ENCODE measurements at regions of chr13 and their contacts with region 1.

Region 1: GRCh38 chr13:40388617-40389016 is 277.8 kb downstream of the FOXO1 start:
- DNase-seq: peak; percentile 75 to 93
- ATAC-seq: peak; percentile 90 to 97 (median 94)
- H3K4me3 ChIP-seq: peak overlapping the region; percentile 45
- H3K4me3 Mint-ChIP-seq: peak overlapping the region; percentile 84
- H3K27ac ChIP-seq: peak overlapping the region; percentile 99
- H3K27ac Mint-ChIP-seq: peak overlapping the region; percentile 93 to 97
- H3K4me1 ChIP-seq: peaks cover 25% of the 10 kb centered on the region
- H3K4me1 Mint-ChIP-seq: peaks cover 42% of the 10 kb centered on the region in 2 donors
- H3K27me3 ChIP-seq: no peaks in the 10 kb centered on the region
- H3K27me3 Mint-ChIP-seq: no peaks in the 10 kb centered on the region
- CTCF ChIP-seq: no peak

Region 2: DNA sequence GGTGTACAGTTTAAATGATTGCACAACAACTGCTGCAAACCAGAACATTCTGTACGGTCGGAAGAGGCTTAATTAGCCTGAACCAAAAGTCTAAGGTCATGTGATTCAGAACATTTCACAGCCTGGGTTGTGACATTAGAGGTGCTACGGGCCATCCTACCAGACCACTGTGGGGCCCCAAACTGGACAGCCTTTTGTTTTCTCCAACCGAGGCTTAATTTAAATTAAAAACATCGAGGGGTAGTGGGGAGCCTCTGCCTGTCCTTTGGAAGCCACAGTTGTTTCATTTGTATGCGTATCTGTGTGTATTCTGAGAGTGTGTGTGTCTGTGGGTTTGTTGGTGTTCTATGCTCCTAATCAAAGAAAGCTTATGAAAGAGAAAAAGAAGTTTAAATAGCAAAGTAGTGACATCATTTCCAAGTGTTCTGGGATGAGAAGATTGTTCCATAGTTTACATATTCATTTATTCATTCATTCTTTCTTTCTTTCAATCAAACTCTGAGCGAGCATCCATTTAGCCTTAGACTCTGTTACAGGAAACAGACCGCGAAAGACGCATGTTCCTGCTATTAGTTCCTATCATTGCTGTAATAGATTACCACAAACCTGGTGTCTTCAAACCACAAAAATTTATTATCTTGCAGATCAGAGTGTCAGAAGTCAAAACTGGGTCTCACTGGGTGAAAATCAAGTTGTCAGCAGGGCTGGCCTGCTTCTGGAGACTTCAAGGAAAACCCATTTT is 167.0 kb before region 1 on chr13:
- intact Hi-C with region 1: loop called (anchors 1 kb)
- DNase-seq: peak; percentile 24 to 84
- ATAC-seq: peak; percentile 71 to 76 (median 73)
- H3K4me3 ChIP-seq: no peak overlapping the region
- H3K4me3 Mint-ChIP-seq: peak overlapping the region; percentile 32
- H3K27ac ChIP-seq: peak overlapping the region; percentile 70
- H3K27ac Mint-ChIP-seq: peak overlapping the region; percentile 74 to 88
- H3K4me1 ChIP-seq: peaks cover 21% of the 10 kb centered on the region
- H3K4me1 Mint-ChIP-seq: peaks cover 33 to 34% of the 10 kb centered on the region in 2 donors
- H3K27me3 ChIP-seq: no peaks in the 10 kb centered on the region
- H3K27me3 Mint-ChIP-seq: no peaks in the 10 kb centered on the region
- CTCF ChIP-seq: no peak

Region 3: GRCh38 chr13:40429706-40430545 is 41.3 kb after region 1 on chr13:
- intact Hi-C with region 1: no loop called
- DNase-seq: no peak
- ATAC-seq: no peak
- H3K4me3 ChIP-seq: no peak overlapping the region
- H3K4me3 Mint-ChIP-seq: no peak overlapping the region
- H3K27ac ChIP-seq: no peak overlapping the region
- H3K27ac Mint-ChIP-seq: no peak overlapping the region
- H3K4me1 ChIP-seq: peaks cover 20% of the 10 kb centered on the region
- H3K4me1 Mint-ChIP-seq: peaks cover 15 to 24% of the 10 kb centered on the region in 2 donors
- H3K27me3 ChIP-seq: no peaks in the 10 kb centered on the region
- H3K27me3 Mint-ChIP-seq: no peaks in the 10 kb centered on the region
- CTCF ChIP-seq: no peak

Region 4: DNA sequence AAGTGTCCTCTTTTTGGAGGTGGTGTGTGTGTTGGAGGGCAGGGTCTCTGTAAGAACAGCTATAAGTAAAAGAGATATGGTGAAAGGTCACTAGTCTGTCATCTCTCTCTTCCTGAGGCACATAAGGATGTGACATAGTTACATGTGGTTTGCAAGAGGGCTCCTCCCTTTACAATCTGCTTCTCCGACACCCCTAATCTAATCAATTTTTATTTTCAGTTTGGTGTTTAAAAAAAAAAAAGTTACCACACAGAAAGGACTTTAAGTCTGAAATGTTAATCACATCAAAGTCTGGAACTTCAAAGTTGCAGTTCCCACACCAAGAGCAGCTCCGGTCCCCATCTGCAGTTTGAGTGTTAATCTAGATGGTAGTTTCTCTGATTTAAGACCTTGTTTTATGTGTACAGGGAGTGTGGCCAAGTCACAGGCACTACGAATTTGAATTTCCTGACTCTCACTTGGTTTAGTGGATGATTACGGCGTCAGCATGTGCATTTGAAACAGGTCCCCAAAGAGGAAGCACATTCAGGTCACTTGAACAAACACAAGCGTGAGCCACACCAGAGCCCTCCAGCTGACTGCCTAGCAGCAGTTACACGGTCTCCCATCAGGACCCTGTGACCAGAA is 224.7 kb after region 1 on chr13:
- intact Hi-C with region 1: loop called (anchors 1 kb)
- DNase-seq: peak; percentile 51 to 85
- ATAC-seq: peak; percentile 85 to 90 (median 87)
- H3K4me3 ChIP-seq: peak overlapping the region; percentile 23
- H3K4me3 Mint-ChIP-seq: peak overlapping the region; percentile 90
- H3K27ac ChIP-seq: peak overlapping the region; percentile 98
- H3K27ac Mint-ChIP-seq: peak overlapping the region; percentile 94 to 99
- H3K4me1 ChIP-seq: peaks cover 35% of the 10 kb centered on the region
- H3K4me1 Mint-ChIP-seq: peaks cover 31 to 46% of the 10 kb centered on the region in 2 donors
- H3K27me3 ChIP-seq: no peaks in the 10 kb centered on the region
- H3K27me3 Mint-ChIP-seq: no peaks in the 10 kb centered on the region
- CTCF ChIP-seq: no peak

Region 5: DNA sequence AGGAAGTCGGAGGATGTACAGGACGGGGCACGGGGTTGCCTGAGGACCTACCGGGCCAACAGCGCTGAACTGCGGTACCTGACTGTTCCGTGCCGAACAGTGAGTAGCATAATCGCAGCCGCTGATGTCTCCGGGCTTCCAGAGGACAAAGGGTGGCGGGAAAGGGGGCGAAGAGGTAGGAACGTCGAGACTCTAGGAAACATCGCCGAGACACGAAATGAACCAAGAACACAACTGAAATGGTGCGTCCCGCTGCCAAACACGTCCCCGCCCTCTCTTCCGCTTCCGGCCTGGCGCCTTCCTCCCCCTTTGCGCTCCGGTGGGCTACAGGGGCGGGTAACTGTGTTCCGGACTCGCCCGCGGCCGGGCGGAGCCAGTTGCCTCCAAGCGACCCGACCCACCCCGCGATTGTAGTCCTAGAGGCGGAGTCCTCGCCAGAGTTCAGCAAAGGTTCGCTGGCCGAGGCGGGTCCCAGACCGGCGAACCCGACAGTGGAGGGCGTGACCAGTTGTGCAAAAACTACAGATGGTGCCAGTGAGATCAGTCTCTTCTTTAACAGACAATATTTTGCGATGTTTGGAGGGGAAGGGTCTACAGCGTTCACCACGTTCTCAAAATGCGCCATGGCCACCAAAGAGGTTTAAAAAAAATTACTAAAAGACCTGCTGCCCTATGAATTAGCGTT is 382.5 kb after region 1 on chr13 and contains the start of gene MRPS31:
- intact Hi-C with region 1: loop called (anchors 2 kb)
- DNase-seq: peak; percentile 93 to 96
- ATAC-seq: peak; percentile 97 to 100 (median 98)
- H3K4me3 ChIP-seq: peak within 1 kb of the TSS; percentile 78
- H3K4me3 Mint-ChIP-seq: peak within 1 kb of the TSS; percentile 97
- H3K27ac ChIP-seq: peak within 1 kb of the TSS; percentile 75
- H3K27ac Mint-ChIP-seq: peak within 1 kb of the TSS; percentile 92 to 95
- H3K4me1 ChIP-seq: peaks cover 13% of the 10 kb centered on the region
- H3K4me1 Mint-ChIP-seq: peaks cover 13 to 19% of the 10 kb centered on the region in 2 donors
- H3K27me3 ChIP-seq: no peaks in the 10 kb centered on the region
- H3K27me3 Mint-ChIP-seq: no peaks in the 10 kb centered on the region
- CTCF ChIP-seq: no peak
- total RNA-seq, gene MRPS31: 13.6 to 19.6 (median 13.8) TPM

Region 6: GRCh38 chr13:41216160-41216559 is 827.5 kb after region 1 on chr13:
- intact Hi-C with region 1: no loop called
- DNase-seq: no peak
- ATAC-seq: no peak
- H3K4me3 ChIP-seq: no peak overlapping the region
- H3K4me3 Mint-ChIP-seq: no peak overlapping the region
- H3K27ac ChIP-seq: no peak overlapping the region
- H3K27ac Mint-ChIP-seq: no peak overlapping the region
- H3K4me1 ChIP-seq: no peaks in the 10 kb centered on the region
- H3K4me1 Mint-ChIP-seq: no peaks in the 10 kb centered on the region
- H3K27me3 ChIP-seq: no peaks in the 10 kb centered on the region
- H3K27me3 Mint-ChIP-seq: no peaks in the 10 kb centered on the region
- CTCF ChIP-seq: no peak